ENCODE measurements at regions of chr12 and their contacts with region 1.

Region 1: DNA sequence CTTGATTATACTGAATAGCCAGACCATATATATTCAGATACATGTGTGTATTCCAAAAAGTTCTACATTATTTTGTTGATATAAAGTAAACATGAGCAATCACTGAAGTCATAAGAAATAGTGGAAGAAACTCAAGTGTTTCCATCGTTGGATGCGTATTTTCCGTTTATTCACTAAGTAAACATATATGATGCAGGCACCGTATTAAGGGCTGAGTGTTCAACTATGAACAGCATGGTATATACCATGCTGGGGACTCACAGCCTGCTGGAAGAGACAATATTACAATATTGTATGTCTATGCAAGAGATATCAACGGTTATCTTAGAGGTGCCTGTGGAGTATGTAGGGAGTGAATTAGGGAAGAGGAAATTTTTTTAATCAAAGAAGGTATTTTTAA is 1.2 kb downstream of the PYROXD1 start:
- DNase-seq: no peak
- ATAC-seq: no peak
- H3K4me3 ChIP-seq: peak overlapping the region in 9 of 12 donors; percentile 61 to 92 (median 84)
- H3K27ac ChIP-seq: peak overlapping the region in 4 of 12 donors; percentile 86 to 92 (median 88)
- H3K4me1 ChIP-seq: peaks cover 0 to 20% (median 7%) of the 10 kb centered on the region in 12 donors
- H3K27me3 ChIP-seq: no peaks in the 10 kb centered on the region
- CTCF ChIP-seq: no peak
- POLR2A ChIP-seq: no peak

Region 2: DNA sequence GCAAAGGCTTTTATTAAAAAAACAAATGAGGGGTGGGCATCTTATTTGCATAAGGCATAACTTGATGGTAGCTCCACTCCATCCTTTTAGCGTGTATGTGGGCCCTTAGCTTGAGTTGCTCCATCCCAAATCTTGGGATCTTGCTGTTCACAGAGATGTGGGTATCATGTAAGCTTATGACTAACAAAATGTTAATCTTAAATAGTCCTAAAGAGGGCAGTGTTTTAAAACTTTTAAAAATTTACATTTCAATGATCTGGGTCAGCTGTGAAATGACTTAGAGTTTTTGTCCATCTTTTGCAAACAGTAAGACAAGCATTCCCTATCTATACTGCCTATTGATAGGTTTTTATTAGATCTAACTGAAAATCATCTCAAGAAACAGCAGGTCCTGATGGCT is 190.0 kb before region 1 on chr12:
- intact Hi-C with region 1: loop called in 1 of 10 experiments (anchors 5 kb)
- DNase-seq: no peak
- ATAC-seq: peak in 1 of 4 donors; percentile 33
- H3K4me3 ChIP-seq: no peak overlapping the region
- H3K27ac ChIP-seq: no peak overlapping the region
- H3K4me1 ChIP-seq: peaks cover 0 to 8% (median 0%) of the 10 kb centered on the region in 12 donors
- H3K27me3 ChIP-seq: no peaks in the 10 kb centered on the region
- CTCF ChIP-seq: peak in 2 of 12 donors; percentile 21
- POLR2A ChIP-seq: no peak

Region 3: DNA sequence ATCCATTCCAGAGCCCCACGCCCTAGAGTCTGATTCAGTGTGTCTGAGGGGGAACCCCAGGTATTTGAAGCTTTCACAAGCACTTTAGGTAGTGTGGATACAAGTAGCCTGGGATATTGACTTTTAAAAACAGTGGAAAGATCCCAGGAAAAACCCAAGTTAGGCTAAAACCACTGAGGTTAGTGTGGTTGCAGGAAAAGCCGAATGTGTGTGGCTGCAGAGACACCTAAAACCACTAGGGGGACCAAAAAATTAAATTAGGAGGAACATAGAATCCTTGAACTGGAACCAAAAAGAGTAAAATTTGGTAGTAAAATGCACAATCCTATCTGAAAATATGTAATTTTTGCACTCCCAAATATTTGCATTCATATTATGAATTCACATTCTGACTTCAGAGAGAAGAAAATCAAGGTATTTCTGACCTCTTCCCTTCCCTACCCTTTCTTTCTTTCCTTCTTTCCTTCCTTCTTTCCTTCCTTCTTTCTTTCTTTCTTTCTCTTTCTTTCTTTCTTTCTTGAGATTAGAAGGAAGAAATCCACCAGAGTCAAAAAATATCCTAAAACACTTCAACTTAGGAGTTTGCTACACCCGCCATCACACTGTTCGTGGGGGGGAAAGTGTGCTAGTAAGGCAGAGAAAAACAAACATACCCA is 141.8 kb before region 1 on chr12:
- intact Hi-C with region 1: loop called in 2 of 10 experiments (anchors 5 to 10 kb)
- DNase-seq: no peak
- ATAC-seq: no peak
- H3K4me3 ChIP-seq: no peak overlapping the region
- H3K27ac ChIP-seq: no peak overlapping the region
- H3K4me1 ChIP-seq: no peaks in the 10 kb centered on the region
- H3K27me3 ChIP-seq: peaks cover 0 to 4% (median 0%) of the 10 kb centered on the region in 9 donors
- CTCF ChIP-seq: peak; percentile 33 to 73 (median 62)
- POLR2A ChIP-seq: no peak

Region 4: DNA sequence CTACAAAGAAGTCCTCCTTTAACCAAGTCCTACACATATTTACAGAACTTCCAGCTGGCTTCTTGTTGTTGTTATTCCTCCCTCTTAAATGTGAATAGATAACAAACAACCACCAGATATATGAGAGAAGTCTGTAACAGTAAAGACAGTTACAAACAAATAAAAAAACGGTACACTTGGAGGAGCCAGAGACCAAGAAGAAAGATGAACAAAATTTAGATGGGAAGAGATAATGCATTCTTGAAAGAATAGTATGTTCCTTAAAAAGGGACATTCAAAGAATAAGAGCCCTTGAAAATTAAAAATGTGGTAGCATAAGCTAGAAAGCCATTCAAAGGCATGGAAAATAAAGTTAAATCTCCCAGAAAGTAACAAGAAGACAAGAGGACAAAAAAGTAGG is 129.9 kb before region 1 on chr12:
- intact Hi-C with region 1: loop called in 1 of 10 experiments (anchors 10 kb)
- DNase-seq: no peak
- ATAC-seq: no peak
- H3K4me3 ChIP-seq: no peak overlapping the region
- H3K27ac ChIP-seq: no peak overlapping the region
- H3K4me1 ChIP-seq: no peaks in the 10 kb centered on the region
- H3K27me3 ChIP-seq: no peaks in the 10 kb centered on the region
- CTCF ChIP-seq: no peak
- POLR2A ChIP-seq: no peak

Region 5: DNA sequence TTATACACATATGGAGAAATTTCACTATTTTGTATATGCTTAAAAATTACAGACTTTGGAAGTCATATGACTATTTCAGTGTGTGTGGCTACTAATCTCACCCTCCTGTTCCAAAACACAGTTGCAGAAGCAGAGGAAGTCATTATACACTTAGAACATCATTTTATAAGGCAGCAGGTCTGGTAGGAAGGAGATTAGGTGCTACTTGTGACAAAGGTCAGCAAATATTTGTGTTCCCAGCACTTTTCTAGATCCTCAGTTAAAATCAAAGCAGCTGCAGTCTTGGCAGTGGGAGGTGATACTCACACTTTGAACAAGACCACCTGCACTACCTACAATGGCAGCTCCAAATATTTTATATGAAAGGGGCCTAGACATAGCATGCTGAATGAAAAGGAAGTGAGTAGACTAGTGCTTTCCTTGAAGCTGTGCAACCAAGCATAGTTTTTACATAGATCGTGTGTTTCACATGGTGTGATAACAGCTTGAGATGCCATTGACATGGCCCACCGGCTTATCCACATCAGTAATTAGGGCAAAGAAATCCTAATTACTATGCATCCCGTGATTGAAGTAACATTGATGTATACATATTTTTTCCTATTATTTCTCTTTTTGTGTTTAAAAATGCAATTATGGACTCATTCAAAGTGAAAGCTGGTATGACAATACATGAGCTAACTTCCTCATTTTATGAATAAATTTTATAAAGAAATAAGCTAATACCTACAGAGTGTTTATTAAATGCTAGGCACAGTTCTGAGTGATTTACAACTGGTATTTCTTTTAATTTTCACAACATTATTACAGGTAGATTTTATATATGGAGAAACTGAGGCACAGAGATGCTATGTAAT is 160.7 kb after region 1 on chr12:
- intact Hi-C with region 1: no loop called
- DNase-seq: no peak
- ATAC-seq: no peak
- H3K4me3 ChIP-seq: no peak overlapping the region
- H3K27ac ChIP-seq: no peak overlapping the region
- H3K4me1 ChIP-seq: no peaks in the 10 kb centered on the region
- H3K27me3 ChIP-seq: no peaks in the 10 kb centered on the region
- CTCF ChIP-seq: no peak
- POLR2A ChIP-seq: no peak